Ascending aorta (tissue), 2 donors: ENCODE measurements at regions of chr2 and their contacts with region 1.

Region 1: GRCh38 chr2:165582409-165582808 is 112.9 kb downstream of the CSRNP3 start:
- DNase-seq: peak in 1 of 2 donors; percentile 68
- H3K4me3 ChIP-seq: no peak overlapping the region
- H3K27ac ChIP-seq: peak overlapping the region; percentile 12 to 34
- H3K4me1 ChIP-seq: peaks cover 0 to 14% of the 10 kb centered on the region in 2 donors
- H3K27me3 ChIP-seq: no peaks in the 10 kb centered on the region
- CTCF ChIP-seq: no peak

Region 2: DNA sequence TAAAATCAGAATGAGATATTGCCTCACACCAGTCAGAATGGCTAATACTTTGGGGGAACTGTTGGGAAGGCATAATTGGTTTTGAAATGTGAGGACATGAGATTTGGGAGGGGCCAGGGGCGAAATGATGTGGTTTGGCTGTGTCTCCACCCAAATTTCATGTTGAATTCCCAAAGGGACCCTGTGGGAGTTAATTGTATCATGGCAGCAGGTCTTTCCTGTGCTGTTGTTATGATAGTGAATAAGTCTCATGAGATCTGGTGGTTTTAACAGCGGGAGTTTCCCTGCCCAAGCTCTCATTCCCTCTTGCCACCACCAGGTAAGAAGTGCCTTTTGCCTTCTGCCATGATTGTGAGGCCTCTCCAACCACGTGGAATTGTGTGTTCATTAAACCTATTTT is 53.3 kb before region 1 on chr2:
- intact Hi-C with region 1: no loop called
- DNase-seq: no peak
- H3K4me3 ChIP-seq: no peak overlapping the region
- H3K27ac ChIP-seq: no peak overlapping the region
- H3K4me1 ChIP-seq: no peaks in the 10 kb centered on the region
- H3K27me3 ChIP-seq: no peaks in the 10 kb centered on the region
- CTCF ChIP-seq: no peak

Region 3: DNA sequence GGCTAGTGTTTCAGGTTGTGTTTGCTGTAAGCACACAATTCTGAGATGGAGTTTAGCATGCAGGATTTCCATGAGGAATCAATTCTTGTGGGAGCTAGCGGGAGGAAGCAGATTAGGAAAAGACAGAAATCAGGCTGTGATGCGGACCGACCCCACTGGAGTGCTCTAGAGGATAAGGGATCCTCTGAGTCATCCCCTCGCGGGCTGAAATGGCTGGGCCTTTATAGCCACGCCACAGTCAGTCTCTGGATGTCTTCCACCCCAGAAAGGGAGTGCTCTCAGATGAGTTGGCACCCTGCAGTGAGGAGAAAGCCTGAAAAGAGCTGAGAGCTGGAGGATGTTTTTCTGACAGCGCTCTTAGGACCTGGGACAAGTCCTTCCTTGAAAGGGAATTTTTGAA is 109.2 kb after region 1 on chr2:
- intact Hi-C with region 1: loop called (anchors 5 kb)
- DNase-seq: no peak
- H3K4me3 ChIP-seq: no peak overlapping the region
- H3K27ac ChIP-seq: peak overlapping the region in 1 of 2 donors; percentile 7
- H3K4me1 ChIP-seq: no peaks in the 10 kb centered on the region
- H3K27me3 ChIP-seq: no peaks in the 10 kb centered on the region
- CTCF ChIP-seq: no peak